Activated CD4-positive, alpha-beta memory T cell treated with anti-CD3 and anti-CD28 coated beads for 36 hours (primary cell): ENCODE measurements at regions of chr5 and their contacts with region 1.

Region 1: DNA sequence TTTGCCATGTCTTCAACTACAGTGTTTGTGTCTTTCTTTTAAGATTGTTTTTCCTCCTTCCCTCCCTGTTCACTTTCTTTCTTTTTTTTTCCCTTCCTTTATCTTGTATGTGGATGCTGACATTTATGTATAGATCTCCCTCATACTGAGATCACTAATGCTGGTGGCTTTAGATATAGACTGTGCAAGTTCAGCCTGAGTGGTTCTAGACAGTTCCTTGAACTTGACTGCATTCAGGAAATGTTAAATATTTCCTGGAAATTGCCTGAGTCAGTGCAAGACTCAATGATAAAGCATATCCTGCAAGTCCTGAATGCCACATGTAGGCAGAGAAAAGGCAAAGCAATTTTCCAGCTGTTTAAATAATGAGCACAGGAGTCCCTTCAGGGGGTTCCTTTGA is 182.5 kb upstream of the NR3C1 start:
- DNase-seq: no peak
- H3K4me3 Mint-ChIP-seq: no peak overlapping the region
- H3K27ac Mint-ChIP-seq: peak overlapping the region; percentile 56
- H3K4me1 Mint-ChIP-seq: peaks cover 51% of the 10 kb centered on the region
- H3K27me3 Mint-ChIP-seq: no peaks in the 10 kb centered on the region

Region 2: GRCh38 chr5:143435210-143435657 is 150.7 kb before region 1 on chr5:
- CTCF ChIA-PET with region 1: no interaction called
- POLR2A ChIA-PET with region 1: no interaction called
- intact Hi-C with region 1: loop called (anchors 5 kb)
- DNase-seq: peak; percentile 51
- H3K4me3 Mint-ChIP-seq: peak overlapping the region; percentile 81
- H3K27ac Mint-ChIP-seq: peak overlapping the region; percentile 87
- H3K4me1 Mint-ChIP-seq: peaks cover 68% of the 10 kb centered on the region
- H3K27me3 Mint-ChIP-seq: no peaks in the 10 kb centered on the region